A549 (cell line): ENCODE measurements at regions of chr1 and their contacts with region 1.

Region 1: DNA sequence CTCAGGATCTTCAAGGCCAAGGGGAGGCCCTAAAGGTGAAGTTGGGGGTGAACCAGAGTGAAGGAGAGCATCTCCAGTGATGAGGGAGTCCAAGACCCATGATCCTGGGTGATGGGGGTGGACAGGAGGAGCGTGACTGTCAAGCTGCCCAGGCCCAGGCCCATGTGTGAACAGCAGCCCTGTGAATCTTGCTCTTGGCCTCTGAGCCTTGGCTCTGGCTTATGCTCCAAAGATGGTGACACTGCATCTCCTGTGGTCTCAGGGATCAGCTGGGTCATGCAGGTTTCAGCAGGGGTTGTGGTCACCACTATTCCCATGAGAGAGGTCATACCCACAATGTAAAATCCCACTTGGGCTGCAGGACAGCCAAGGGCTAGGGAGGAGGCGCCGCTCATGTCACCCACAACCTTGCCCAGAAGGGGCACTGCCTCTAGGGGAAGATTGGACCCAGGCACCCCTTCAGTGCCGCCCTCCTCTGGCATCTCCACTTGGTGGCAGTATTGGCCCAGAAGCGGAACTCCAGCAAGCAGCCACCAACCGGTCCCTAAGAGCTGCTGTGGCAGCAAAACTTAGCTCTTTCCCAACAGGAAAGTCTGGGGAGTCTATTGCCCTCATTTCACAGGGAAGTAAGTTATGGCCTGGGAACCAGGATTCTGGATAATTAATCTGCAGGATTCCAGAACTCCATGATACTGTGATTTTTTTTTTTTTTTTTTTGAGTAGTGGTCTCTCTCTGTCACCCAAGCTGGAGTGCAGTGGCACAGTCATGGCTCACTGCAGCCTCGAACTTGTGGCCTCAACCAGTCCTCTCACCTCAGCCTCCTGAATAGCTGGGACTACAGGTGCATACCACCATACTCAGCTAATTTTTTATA is 7.5 kb upstream of the WNT3A start:
- DNase-seq: peak; percentile 86 to 92
- ATAC-seq: peak; percentile 89 to 97
- H3K4me3 ChIP-seq: no peak overlapping the region
- H3K27ac ChIP-seq: no peak overlapping the region
- H3K4me1 ChIP-seq: no peaks in the 10 kb centered on the region
- CTCF ChIP-seq: peak; percentile 80
- EP300 ChIP-seq: no peak
- POLR2A ChIP-seq: no peak
- RAD21 ChIP-seq: peak; percentile 88 to 93

Region 2: DNA sequence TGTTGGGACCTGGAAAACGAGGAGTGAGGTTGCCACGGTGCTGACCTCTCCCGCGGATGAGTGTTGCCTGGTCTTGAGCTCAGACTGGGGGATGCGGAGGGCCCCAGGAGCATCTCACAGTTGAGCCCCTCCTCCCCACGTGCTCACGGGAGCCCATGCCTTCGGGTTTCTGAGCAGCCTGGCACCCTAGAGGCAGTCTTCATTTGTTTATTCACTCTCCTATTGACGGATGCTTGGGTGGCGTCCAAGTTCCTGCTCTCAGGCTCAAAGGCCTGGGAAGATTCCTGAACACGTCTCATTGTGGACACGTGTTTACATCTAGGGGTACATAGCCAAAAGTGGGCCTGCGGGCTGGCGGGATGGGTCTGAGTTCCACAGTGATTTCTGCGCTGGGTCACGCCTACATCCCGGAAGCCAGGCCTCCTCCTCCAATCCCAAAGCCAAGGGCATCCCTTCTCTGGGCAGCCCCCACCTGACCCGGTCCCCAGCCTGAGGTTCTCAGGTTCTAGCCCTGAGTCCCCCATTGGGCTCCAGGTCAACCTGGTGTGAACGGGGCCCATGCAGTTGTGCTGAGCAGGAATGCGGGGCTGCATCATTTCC is 22.2 kb after region 1 on chr1:
- CTCF ChIA-PET with region 1: interaction called, 17 read pairs
- POLR2A ChIA-PET with region 1: no interaction called
- DNase-seq: no peak
- ATAC-seq: no peak
- H3K4me3 ChIP-seq: no peak overlapping the region
- H3K27ac ChIP-seq: no peak overlapping the region
- H3K4me1 ChIP-seq: no peaks in the 10 kb centered on the region
- CTCF ChIP-seq: no peak
- EP300 ChIP-seq: no peak
- POLR2A ChIP-seq: no peak
- RAD21 ChIP-seq: no peak

Region 3: DNA sequence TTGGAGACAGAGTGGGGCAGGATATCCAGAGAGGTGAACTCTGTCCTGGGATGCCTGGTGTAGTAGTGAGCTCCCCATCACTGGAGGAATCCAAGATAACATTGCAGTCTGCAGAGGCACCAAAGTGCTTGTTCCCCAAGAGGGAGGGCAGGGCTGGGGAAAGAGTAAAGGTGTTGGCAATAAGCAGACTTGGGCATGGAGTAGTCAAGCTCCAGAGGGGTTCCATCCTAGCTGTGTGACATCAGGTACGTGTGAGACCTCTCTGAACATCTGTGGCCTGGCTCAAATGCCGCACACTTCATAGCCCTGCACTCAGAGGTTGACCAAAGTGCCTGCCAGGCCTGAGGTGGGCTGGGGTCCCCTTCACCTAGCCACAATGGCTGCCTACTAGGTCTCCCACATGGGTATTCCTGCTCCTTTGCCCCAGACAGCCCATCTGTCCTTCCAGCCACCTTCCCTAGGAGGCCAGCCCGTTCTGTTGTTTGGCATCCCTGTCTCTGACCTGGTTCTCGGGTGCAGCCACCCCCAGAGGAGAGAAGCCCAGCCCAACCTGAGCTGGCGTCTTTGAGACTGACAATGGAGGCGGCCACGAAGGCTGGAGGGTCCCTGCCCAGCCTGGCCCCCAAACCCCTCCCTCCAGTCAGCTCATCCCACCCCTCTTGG is 80.4 kb after region 1 on chr1:
- CTCF ChIA-PET with region 1: interaction called, 13 read pairs
- POLR2A ChIA-PET with region 1: interaction called, 4 read pairs
- DNase-seq: no peak
- ATAC-seq: no peak
- H3K4me3 ChIP-seq: no peak overlapping the region
- H3K27ac ChIP-seq: no peak overlapping the region
- H3K4me1 ChIP-seq: peaks cover 13% of the 10 kb centered on the region
- CTCF ChIP-seq: no peak
- EP300 ChIP-seq: no peak
- POLR2A ChIP-seq: no peak
- RAD21 ChIP-seq: no peak

Region 4: DNA sequence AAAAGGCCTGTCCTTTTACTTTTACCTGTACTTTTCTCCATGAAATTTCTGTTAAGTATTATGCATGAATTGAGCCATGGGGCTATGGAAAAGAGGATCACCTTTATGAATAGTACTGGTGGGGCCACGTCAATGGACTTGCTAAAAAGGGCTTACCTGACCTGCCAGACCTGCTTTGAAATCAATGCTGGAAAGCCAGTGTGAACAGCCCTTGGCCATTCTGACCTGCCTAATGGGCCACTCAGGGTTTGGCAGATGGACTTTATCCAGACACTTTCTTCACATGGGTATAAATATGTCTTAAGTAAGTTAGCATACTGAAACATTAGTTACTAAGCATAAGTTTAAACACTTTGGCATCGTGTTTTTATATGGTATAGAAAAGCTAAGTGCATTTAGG is 132.5 kb after region 1 on chr1:
- CTCF ChIA-PET with region 1: interaction called, 21 read pairs
- POLR2A ChIA-PET with region 1: no interaction called
- DNase-seq: no peak
- ATAC-seq: no peak
- H3K4me3 ChIP-seq: no peak overlapping the region
- H3K27ac ChIP-seq: no peak overlapping the region
- H3K4me1 ChIP-seq: no peaks in the 10 kb centered on the region
- CTCF ChIP-seq: no peak
- EP300 ChIP-seq: no peak
- POLR2A ChIP-seq: no peak
- RAD21 ChIP-seq: no peak

Region 5: GRCh38 chr1:228281933-228282645 is 282.8 kb after region 1 on chr1:
- CTCF ChIA-PET with region 1: no interaction called
- POLR2A ChIA-PET with region 1: no interaction called
- DNase-seq: no peak
- ATAC-seq: no peak
- H3K4me3 ChIP-seq: no peak overlapping the region
- H3K27ac ChIP-seq: no peak overlapping the region
- H3K4me1 ChIP-seq: no peaks in the 10 kb centered on the region
- CTCF ChIP-seq: no peak
- EP300 ChIP-seq: no peak
- POLR2A ChIP-seq: no peak
- RAD21 ChIP-seq: no peak

Region 6: DNA sequence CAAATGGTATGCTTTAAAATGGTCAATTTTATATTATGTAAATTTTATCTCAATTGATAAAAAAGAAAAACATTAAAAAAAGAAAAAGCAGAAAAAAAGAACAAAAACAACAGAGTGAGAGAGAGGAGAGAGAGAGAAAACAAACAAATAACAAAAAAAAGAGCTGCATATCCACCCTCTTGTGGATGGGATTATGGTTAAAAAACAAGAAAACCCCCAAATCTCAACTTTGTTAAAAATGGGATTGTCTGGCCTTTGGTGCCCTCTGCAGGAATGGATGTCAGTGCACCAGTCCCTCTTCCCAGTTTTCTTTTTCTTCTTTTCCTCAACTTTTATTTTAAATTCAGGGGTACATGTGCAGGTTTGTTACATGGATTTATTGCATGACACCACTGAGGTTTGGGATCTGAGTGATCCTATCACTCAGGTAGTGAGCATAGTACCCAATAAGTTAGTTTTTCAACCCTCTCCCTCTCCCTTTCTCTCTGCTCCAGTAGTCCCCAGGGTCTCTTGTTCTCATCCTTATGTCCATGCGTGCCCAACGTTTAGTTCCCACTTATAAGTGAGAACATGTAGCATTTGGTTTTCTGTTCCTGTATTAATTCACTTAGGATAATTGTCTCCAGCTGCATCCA is 516.0 kb after region 1 on chr1:
- CTCF ChIA-PET with region 1: interaction called, 11 read pairs
- POLR2A ChIA-PET with region 1: no interaction called
- DNase-seq: peak; percentile 55 to 60
- ATAC-seq: peak; percentile 47 to 83; a peak in 3 of 6 replicates
- H3K4me3 ChIP-seq: no peak overlapping the region
- H3K27ac ChIP-seq: no peak overlapping the region
- H3K4me1 ChIP-seq: no peaks in the 10 kb centered on the region
- CTCF ChIP-seq: peak; percentile 94
- EP300 ChIP-seq: no peak
- POLR2A ChIP-seq: no peak
- RAD21 ChIP-seq: peak; percentile 95